Uterus (tissue), 4 donors: ENCODE measurements at regions of chr1 and their contacts with region 1.

Region 1: DNA sequence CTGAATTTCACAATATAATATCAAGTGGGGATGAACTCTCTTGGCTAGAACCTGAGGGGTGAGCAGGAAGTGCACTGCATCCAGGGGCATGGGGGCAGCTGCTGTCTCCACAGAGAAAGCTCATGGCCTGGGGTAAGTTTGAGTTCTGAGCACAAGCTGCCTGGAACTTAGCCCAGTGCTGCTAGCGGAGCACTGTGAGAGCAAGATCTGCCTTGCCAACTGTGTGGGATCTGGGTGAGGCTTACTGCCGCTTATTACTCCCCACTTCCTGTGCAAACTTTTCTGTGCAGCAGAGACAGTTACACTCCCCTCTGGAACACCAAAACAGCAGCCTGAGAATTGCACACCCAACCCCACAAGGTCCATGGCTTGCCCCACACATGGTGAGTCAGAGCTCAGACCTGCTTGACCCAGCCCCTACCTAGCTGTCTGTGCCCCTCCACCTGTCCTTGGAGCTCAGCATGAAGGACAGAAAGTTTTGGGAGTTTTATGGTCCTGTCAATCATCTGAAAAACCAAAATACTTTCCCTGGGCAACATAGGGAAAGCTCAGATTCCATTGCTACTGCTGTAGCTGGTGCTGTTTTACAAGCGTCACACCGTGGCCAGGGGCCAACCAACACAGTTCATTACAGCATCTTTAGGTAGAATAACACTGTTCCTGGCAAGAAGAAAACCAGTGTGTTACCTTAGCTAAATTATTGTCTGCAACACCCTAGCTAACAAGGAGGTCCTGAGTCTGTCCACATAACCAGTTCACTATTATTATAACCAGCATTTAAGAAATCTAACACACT is 762.1 kb upstream of the NEGR1 start:
- DNase-seq: no peak
- H3K4me3 ChIP-seq: no peak overlapping the region
- H3K27ac ChIP-seq: no peak overlapping the region
- H3K4me1 ChIP-seq: no peaks in the 10 kb centered on the region
- H3K27me3 ChIP-seq: no peaks in the 10 kb centered on the region
- CTCF ChIP-seq: no peak
- POLR2A ChIP-seq: no peak

Region 2: GRCh38 chr1:72936151-72936740 is 108.2 kb before region 1 on chr1:
- intact Hi-C with region 1: loop called (anchors 5 kb)
- DNase-seq: no peak
- H3K4me3 ChIP-seq: no peak overlapping the region
- H3K27ac ChIP-seq: no peak overlapping the region
- H3K4me1 ChIP-seq: no peaks in the 10 kb centered on the region
- H3K27me3 ChIP-seq: no peaks in the 10 kb centered on the region
- CTCF ChIP-seq: no peak
- POLR2A ChIP-seq: no peak

Region 3: DNA sequence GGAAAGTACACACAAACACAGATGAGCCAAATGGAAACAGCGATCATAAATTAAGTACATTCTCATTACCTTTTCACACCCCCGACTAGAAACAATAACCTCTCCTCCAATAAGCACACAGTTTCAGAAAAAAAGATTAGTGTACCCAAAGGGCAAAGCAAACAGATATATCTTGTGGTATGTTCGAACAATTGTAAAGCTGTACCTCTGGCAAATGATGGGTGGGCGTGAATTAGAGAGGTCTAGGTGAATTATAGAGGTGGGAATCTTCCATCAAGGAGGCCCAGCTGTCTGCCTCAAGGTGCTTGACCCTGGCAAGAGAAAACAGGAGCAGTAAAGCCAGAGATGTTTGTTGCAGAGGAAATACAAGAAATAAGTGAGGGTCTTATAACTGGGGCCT is 46.8 kb before region 1 on chr1:
- intact Hi-C with region 1: no loop called
- DNase-seq: no peak
- H3K4me3 ChIP-seq: no peak overlapping the region
- H3K27ac ChIP-seq: no peak overlapping the region
- H3K4me1 ChIP-seq: no peaks in the 10 kb centered on the region
- H3K27me3 ChIP-seq: no peaks in the 10 kb centered on the region
- CTCF ChIP-seq: no peak
- POLR2A ChIP-seq: no peak

Region 4: DNA sequence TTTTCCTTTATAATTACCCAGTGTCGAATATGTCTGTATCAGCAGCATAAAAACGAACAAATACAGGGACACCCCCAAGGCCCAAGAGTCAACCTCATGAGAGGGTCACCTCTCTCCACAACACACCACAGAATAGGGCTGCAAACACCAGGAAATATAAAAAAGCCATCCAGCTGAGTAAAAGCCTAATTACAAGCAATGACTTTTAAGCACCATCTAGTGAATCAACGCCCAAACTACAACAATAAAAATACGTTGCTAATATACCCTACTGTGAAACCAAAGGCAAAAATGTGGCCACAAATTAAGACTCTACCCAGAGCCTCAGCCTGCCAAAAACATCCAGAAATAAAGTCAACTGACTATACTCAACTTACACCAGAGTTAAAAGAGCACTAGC is 55.8 kb after region 1 on chr1:
- intact Hi-C with region 1: no loop called
- DNase-seq: no peak
- H3K4me3 ChIP-seq: no peak overlapping the region
- H3K27ac ChIP-seq: no peak overlapping the region
- H3K4me1 ChIP-seq: no peaks in the 10 kb centered on the region
- H3K27me3 ChIP-seq: no peaks in the 10 kb centered on the region
- CTCF ChIP-seq: no peak
- POLR2A ChIP-seq: no peak

Region 5: DNA sequence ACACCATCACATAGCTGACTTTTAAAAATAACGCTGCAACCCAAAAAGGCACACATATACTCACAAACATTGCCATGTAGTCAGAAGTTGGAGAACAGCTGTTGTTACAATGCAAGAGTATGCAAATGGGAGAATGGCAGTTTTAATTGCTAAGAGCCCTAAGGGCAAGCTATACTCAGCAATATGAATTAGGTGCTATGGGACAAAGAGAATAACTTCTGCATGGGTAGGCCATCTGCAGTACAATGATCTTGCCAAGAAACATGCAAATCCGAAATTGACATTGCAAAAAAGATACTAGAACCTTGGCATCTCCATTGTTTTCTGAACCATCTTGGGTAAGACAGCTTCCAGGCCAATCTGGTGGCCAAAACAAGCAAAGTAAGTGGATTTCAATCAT is 455.7 kb after region 1 on chr1:
- intact Hi-C with region 1: no loop called
- DNase-seq: no peak
- H3K4me3 ChIP-seq: no peak overlapping the region
- H3K27ac ChIP-seq: no peak overlapping the region
- H3K4me1 ChIP-seq: no peaks in the 10 kb centered on the region
- H3K27me3 ChIP-seq: no peaks in the 10 kb centered on the region
- CTCF ChIP-seq: no peak
- POLR2A ChIP-seq: no peak